B cell (primary cell): ENCODE measurements at regions of chr2 and their contacts with region 1.

Region 1: GRCh38 chr2:191218292-191218898 is 26.8 kb upstream of the MYO1B start:
- DNase-seq: peak; percentile 73
- ATAC-seq: peak; percentile 56
- H3K4me3 ChIP-seq: no peak overlapping the region
- H3K4me3 Mint-ChIP-seq: no peak overlapping the region
- H3K27ac ChIP-seq: no peak overlapping the region
- H3K27ac Mint-ChIP-seq: no peak overlapping the region
- H3K4me1 ChIP-seq: peaks cover 7 to 12% of the 10 kb centered on the region in 2 donors
- H3K4me1 Mint-ChIP-seq: peaks cover 20% of the 10 kb centered on the region
- H3K27me3 ChIP-seq: no peaks in the 10 kb centered on the region
- H3K27me3 Mint-ChIP-seq: peaks cover 3% of the 10 kb centered on the region
- CTCF ChIP-seq: peak; percentile 81

Region 2: GRCh38 chr2:190927301-190927700 is 291.1 kb before region 1 on chr2:
- CTCF ChIA-PET with region 1: no interaction called
- POLR2A ChIA-PET with region 1: no interaction called
- intact Hi-C with region 1: no loop called
- DNase-seq: no peak
- ATAC-seq: no peak
- H3K4me3 ChIP-seq: no peak overlapping the region
- H3K4me3 Mint-ChIP-seq: no peak overlapping the region
- H3K27ac ChIP-seq: no peak overlapping the region
- H3K27ac Mint-ChIP-seq: no peak overlapping the region
- H3K4me1 ChIP-seq: no peaks in the 10 kb centered on the region
- H3K4me1 Mint-ChIP-seq: no peaks in the 10 kb centered on the region
- H3K27me3 ChIP-seq: no peaks in the 10 kb centered on the region
- H3K27me3 Mint-ChIP-seq: no peaks in the 10 kb centered on the region
- CTCF ChIP-seq: no peak

Region 3: GRCh38 chr2:191165176-191165643 is 53.2 kb before region 1 on chr2:
- CTCF ChIA-PET with region 1: interaction called, 23 read pairs
- POLR2A ChIA-PET with region 1: no interaction called
- intact Hi-C with region 1: loop called (anchors 2 kb)
- DNase-seq: peak; percentile 53
- ATAC-seq: peak; percentile 60
- H3K4me3 ChIP-seq: no peak overlapping the region
- H3K4me3 Mint-ChIP-seq: no peak overlapping the region
- H3K27ac ChIP-seq: no peak overlapping the region
- H3K27ac Mint-ChIP-seq: no peak overlapping the region
- H3K4me1 ChIP-seq: no peaks in the 10 kb centered on the region
- H3K4me1 Mint-ChIP-seq: peaks cover 3% of the 10 kb centered on the region
- H3K27me3 ChIP-seq: peaks cover 0 to 5% (median 0%) of the 10 kb centered on the region in 4 experiments
- H3K27me3 Mint-ChIP-seq: peaks cover 9% of the 10 kb centered on the region
- CTCF ChIP-seq: peak; percentile 79

Region 4: GRCh38 chr2:191206613-191207481 is 11.5 kb before region 1 on chr2:
- CTCF ChIA-PET with region 1: interaction called, 10 read pairs
- POLR2A ChIA-PET with region 1: no interaction called
- intact Hi-C with region 1: no loop called
- DNase-seq: no peak
- ATAC-seq: no peak
- H3K4me3 ChIP-seq: no peak overlapping the region
- H3K4me3 Mint-ChIP-seq: no peak overlapping the region
- H3K27ac ChIP-seq: no peak overlapping the region
- H3K27ac Mint-ChIP-seq: no peak overlapping the region
- H3K4me1 ChIP-seq: peaks cover 7 to 13% of the 10 kb centered on the region in 2 donors
- H3K4me1 Mint-ChIP-seq: peaks cover 14% of the 10 kb centered on the region
- H3K27me3 ChIP-seq: no peaks in the 10 kb centered on the region
- H3K27me3 Mint-ChIP-seq: no peaks in the 10 kb centered on the region
- CTCF ChIP-seq: no peak

Region 5: DNA sequence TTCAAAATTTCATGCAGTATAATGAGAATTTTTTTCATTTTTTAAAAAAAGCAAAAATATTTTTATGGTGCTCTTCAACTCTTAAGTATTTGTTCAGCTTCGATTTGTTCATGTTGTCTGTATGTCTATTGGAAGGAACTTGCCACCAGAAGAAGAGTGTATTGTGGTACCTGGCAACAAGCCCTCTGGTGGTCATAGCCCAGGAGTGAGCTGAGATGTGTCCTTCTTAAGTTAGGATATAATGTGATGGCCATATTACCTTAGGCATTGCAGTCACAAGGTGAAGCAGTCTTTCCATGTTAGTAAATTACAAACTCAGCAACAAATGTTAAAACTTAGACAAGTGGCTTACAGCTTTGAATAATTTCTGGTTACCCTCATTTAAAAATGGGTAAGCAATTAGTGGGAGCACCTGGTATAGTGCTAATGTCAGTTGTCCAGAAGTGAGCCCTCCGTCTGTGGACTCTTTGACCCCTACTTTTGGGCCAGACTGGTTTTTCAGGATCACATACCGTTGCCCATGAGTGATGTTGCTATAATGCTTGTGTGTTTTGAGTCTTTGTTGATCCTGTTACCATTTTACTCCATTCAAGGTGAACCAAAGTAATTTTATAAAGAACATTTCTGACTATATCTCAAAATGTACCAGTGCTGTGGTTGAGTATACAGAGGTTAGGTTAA is 84.2 kb after region 1 on chr2:
- CTCF ChIA-PET with region 1: interaction called, 13 read pairs
- POLR2A ChIA-PET with region 1: no interaction called
- intact Hi-C with region 1: no loop called
- DNase-seq: peak; percentile 57
- ATAC-seq: peak; percentile 53
- H3K4me3 ChIP-seq: no peak overlapping the region
- H3K4me3 Mint-ChIP-seq: no peak overlapping the region
- H3K27ac ChIP-seq: no peak overlapping the region
- H3K27ac Mint-ChIP-seq: no peak overlapping the region
- H3K4me1 ChIP-seq: peaks cover 4 to 8% of the 10 kb centered on the region in 2 donors
- H3K4me1 Mint-ChIP-seq: peaks cover 10% of the 10 kb centered on the region
- H3K27me3 ChIP-seq: no peaks in the 10 kb centered on the region
- H3K27me3 Mint-ChIP-seq: peaks cover 7% of the 10 kb centered on the region
- CTCF ChIP-seq: peak; percentile 47

Region 6: GRCh38 chr2:191521608-191522208 is 303.3 kb after region 1 on chr2:
- CTCF ChIA-PET with region 1: interaction called, 36 read pairs
- POLR2A ChIA-PET with region 1: no interaction called
- intact Hi-C with region 1: loop called (anchors 1 kb)
- DNase-seq: peak; percentile 37
- ATAC-seq: peak; percentile 33
- H3K4me3 ChIP-seq: no peak overlapping the region
- H3K4me3 Mint-ChIP-seq: no peak overlapping the region
- H3K27ac ChIP-seq: no peak overlapping the region
- H3K27ac Mint-ChIP-seq: no peak overlapping the region
- H3K4me1 ChIP-seq: no peaks in the 10 kb centered on the region
- H3K4me1 Mint-ChIP-seq: no peaks in the 10 kb centered on the region
- H3K27me3 ChIP-seq: peaks cover 0 to 4% (median 0%) of the 10 kb centered on the region in 4 experiments
- H3K27me3 Mint-ChIP-seq: peaks cover 4% of the 10 kb centered on the region
- CTCF ChIP-seq: peak; percentile 92